Activated naive CD8-positive, alpha-beta T cell treated with anti-CD3 and anti-CD28 coated beads, Interleukin-2, amount 10 ng/mL, durations not matched to agents 7 days and 5 days (primary cell): ENCODE measurements at regions of chr17 and their contacts with region 1.

Region 1: DNA sequence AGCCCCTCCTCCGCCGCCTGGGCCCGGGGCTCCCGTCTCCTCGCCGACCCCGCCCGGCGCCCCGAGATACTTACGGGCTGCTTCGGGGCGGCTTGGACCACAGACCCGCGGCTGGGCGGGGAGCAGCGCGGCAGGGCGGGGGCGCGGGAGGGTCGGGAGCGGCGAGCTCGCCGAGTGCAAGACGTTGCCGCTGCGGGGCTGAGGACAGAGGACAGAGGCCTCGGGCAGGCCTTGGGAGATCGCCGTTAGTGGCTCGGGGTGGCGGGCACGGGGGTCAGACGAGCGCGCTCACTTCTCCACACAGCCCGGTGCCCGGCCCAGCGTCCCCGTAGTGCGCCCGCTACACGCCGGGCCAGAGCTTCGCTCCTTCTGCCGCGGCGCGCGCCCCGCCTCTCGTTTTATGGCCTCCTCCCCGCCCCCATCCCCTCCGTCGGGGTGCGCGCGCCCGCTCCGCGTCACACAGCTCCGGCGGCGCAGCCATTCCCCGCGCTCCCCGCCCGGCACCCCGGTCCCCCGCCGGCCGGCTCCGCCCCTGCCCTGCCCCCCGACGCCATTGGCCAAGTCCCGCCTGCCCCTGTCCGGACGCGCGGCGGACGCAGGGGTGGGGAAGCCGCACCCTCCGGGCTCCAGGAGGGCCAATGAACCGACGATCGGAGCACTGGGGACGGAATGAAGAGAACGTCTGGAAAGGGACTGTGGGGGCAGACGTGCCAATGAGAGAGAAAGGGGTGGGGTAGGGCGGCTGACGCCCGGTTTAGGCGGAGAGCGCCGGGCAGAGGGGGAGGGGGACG is at the start of gene TOB1:
- DNase-seq: peak; percentile 98
- ATAC-seq: peak; percentile 66
- H3K4me3 Mint-ChIP-seq: peak within 1 kb of the TSS; percentile 99
- H3K27ac Mint-ChIP-seq: peak within 1 kb of the TSS; percentile 99
- H3K4me1 Mint-ChIP-seq: peaks cover 35% of the 10 kb centered on the region
- H3K27me3 Mint-ChIP-seq: peaks cover 12% of the 10 kb centered on the region
- total RNA-seq, gene TOB1: 54.9 to 56.6 TPM

Region 2: GRCh38 chr17:50719144-50719923 is 146.8 kb before region 1 on chr17 and contains the start of gene LUC7L3:
- POLR2A ChIA-PET with region 1: interaction called, 13 read pairs
- DNase-seq: peak; percentile 99
- ATAC-seq: peak; percentile 90
- H3K4me3 Mint-ChIP-seq: peak within 1 kb of the TSS; percentile 97
- H3K27ac Mint-ChIP-seq: peak within 1 kb of the TSS; percentile 99
- H3K4me1 Mint-ChIP-seq: peaks cover 18% of the 10 kb centered on the region
- H3K27me3 Mint-ChIP-seq: no peaks in the 10 kb centered on the region
- total RNA-seq, gene LUC7L3: 184 to 200 TPM

Region 3: DNA sequence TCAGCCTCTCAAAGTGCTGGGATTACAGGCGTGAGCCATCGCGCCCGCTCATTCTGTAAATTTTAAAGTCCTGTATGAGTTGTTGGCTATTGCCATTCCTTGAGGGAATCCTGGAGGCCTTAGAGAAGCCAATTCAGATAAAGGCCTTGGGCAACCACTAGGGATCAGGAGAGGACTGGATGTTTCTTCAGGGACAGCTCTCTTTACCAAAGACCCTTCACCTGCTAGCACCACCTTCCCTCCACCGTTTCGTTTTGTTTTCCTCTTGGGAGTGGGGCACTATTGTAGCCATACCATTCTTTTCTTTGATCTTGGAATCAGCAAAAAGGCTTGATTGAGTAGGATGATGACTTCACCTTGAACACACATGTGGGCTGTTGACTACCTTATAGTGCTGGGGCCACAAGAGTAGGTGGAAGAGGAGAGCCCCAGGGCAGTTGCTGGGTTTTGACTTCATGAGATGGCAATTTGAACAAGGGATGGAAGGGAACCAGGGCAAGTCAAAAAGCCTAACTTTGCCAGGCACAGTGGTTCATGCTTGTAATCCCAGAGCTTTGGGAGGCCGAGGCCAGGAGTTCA is 91.9 kb before region 1 on chr17:
- POLR2A ChIA-PET with region 1: no interaction called
- DNase-seq: no peak
- ATAC-seq: no peak
- H3K4me3 Mint-ChIP-seq: no peak overlapping the region
- H3K27ac Mint-ChIP-seq: no peak overlapping the region
- H3K4me1 Mint-ChIP-seq: peaks cover 1% of the 10 kb centered on the region
- H3K27me3 Mint-ChIP-seq: peaks cover 18% of the 10 kb centered on the region

Region 4: GRCh38 chr17:50841949-50842354 is 24.2 kb before region 1 on chr17:
- POLR2A ChIA-PET with region 1: no interaction called
- DNase-seq: peak; percentile 66
- ATAC-seq: peak; percentile 55
- H3K4me3 Mint-ChIP-seq: no peak overlapping the region
- H3K27ac Mint-ChIP-seq: no peak overlapping the region
- H3K4me1 Mint-ChIP-seq: no peaks in the 10 kb centered on the region
- H3K27me3 Mint-ChIP-seq: no peaks in the 10 kb centered on the region

Region 5: DNA sequence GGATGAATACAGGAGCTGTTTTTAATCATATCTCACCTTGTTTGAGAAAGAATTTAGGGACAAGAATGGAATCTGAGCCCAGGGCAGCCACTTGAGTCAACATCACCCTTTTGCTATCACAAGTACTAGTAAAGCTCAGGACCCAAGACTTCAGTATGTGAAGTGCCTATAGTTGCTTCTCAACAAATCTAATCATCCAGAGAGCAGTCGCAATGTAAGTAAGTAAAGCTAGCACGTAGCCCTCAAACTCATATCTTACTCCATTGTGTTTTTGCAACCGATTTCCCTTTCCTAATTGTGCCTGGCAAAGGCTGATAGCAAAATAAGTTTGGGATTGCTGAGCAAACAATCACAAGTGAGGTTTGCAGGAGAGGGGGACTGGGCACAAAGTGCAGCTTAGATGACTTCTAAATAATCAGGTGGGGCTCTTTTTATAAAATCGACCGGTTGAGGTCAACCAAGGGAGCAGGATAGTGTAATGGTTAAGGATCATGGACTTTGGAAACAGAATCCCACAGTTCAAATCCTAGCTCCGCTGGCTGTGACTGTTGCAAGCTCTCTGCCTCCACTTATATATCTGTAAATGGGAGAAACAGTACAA is 13.1 kb before region 1 on chr17:
- POLR2A ChIA-PET with region 1: interaction called, 91 read pairs
- DNase-seq: no peak
- ATAC-seq: no peak
- H3K4me3 Mint-ChIP-seq: no peak overlapping the region
- H3K27ac Mint-ChIP-seq: peak overlapping the region; percentile 87
- H3K4me1 Mint-ChIP-seq: peaks cover 12% of the 10 kb centered on the region
- H3K27me3 Mint-ChIP-seq: peaks cover 9% of the 10 kb centered on the region

Region 6: GRCh38 chr17:50904521-50905459 is 38.6 kb after region 1 on chr17:
- POLR2A ChIA-PET with region 1: interaction called, 139 read pairs
- DNase-seq: no peak
- ATAC-seq: peak; percentile 9
- H3K4me3 Mint-ChIP-seq: no peak overlapping the region
- H3K27ac Mint-ChIP-seq: peak overlapping the region; percentile 21
- H3K4me1 Mint-ChIP-seq: peaks cover 36% of the 10 kb centered on the region
- H3K27me3 Mint-ChIP-seq: no peaks in the 10 kb centered on the region

Region 7: DNA sequence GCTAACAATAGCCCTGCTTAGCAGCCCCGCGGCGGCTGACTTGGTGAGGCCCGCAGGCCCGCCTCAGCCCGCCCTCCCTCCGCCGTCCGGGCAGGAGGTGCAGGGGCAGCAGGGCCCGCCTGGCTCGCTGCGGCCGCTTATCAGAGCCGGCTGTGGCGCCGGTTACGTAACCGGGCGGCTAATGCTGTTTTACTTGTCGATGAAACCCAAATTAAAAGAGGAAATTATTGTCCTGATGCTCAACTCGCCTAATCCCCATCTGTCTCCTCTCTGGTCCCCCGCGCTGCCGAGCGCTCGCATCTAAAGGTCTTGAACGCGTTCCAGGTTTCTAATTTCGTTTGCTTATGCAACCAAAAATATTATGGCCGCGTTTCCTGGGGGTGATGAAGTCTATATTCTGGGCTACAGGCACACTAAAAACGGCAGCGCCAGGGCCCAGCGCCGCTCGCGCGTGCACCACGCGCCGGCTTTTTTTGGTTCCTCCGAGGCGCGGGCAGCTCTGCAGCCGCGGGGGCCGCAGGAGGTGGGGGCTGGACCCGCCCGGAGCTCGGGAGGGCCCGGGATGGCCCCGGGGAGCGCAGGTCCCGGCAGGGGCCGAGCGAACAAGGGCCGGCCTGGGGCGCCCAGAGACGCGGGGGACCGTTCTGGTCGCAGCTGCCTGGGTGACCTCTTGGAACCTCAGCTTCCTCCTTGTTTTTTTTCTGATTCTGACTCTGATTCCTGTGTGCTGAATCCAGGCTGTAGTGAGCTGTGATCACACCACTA is 65.1 kb after region 1 on chr17:
- POLR2A ChIA-PET with region 1: interaction called, 62 read pairs
- DNase-seq: peak; percentile 60
- ATAC-seq: peak; percentile 62
- H3K4me3 Mint-ChIP-seq: peak overlapping the region; percentile 91
- H3K27ac Mint-ChIP-seq: peak overlapping the region; percentile 92
- H3K4me1 Mint-ChIP-seq: peaks cover 23% of the 10 kb centered on the region
- H3K27me3 Mint-ChIP-seq: peaks cover 27% of the 10 kb centered on the region

Region 8: DNA sequence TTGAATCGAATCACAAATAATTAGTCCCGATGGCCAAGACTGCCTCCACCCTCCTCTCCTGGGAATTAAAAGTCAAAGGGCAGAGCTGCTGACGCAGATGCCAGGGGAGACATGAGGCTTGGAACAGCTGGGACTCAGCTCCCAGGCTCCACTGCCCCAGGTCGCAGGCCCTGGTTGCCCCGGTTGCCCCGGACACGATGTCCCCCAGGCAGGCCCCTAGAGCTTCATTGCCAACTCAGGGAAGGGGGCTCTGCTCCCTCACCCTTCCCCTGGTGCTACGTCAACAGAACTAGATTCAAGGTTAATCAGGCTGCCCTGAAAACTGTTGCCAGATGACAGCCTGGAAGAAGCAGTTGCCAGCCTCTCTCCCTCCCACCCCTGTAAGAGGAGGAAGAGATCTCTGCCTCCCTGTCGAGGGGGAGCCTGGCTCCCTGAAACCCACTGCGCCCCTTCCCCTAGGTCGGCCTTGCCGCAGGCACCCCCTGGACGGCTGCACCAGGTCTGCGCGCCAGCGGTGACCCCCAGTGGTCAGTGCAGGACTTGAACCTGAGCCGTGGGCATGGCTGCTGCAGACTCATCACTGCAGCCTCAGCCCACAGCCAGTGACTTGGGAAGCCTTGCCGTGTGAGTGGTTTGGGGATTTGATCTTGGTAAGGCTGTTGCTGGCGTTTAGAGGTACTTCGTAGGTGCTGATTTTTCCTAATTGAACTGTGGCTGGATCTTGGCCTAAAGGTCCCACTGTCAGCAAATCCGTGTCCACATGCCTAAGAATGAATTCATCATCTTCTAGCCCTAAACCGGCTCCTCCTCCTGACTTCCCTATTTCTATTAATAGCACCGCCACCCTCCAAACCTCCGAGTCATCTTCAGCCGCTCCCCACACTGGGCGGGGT is 84.1 kb after region 1 on chr17:
- POLR2A ChIA-PET with region 1: interaction called, 247 read pairs
- DNase-seq: peak; percentile 72
- ATAC-seq: peak; percentile 86
- H3K4me3 Mint-ChIP-seq: no peak overlapping the region
- H3K27ac Mint-ChIP-seq: peak overlapping the region; percentile 38
- H3K4me1 Mint-ChIP-seq: peaks cover 22% of the 10 kb centered on the region
- H3K27me3 Mint-ChIP-seq: peaks cover 4% of the 10 kb centered on the region

Region 9: DNA sequence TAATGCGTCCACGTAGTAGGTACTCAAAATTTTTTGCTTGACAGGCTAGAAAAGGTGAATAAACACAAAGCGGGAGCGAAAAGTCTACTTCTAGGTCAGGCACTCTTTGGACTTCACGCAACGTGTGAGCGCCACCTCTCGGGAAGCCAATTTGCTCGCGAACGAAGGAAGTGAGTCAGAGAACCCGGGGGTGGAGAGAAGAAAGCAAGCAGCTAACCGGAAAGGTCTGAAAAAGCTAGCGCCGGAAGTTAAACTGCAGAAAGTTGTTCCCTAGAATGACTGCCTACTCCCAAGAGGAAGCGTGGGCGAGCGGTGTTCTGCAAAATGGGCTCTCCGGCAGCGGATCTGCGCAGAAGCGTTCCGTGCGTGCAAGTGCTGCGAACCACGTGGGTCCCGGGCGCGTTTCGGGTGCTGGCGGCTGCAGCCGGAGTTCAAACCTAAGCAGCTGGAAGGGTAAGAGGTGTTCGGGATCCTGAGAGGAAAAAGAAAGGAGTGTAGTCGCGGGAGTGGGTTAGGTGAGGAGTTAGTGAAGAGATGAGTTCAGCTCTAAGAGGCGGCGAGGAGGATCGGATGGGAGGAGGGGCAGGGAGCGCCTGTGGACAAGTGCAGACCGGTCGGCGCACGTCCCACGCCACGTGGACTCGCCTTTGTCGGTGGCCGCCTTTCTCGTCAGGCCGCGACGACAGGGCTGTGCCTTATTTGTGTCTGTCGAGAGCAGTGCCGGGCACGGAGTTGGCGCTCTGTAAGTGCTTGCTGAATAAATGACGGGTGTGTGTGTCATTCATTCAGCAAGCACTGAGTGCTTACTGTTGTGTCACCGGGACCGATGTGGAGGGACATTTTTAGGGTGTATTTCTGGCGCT is 287.3 kb after region 1 on chr17 and contains the start of gene NME1:
- POLR2A ChIA-PET with region 1: interaction called, 16 read pairs
- DNase-seq: peak; percentile 98
- ATAC-seq: peak; percentile 95
- H3K4me3 Mint-ChIP-seq: no peak within 1 kb of the TSS
- H3K27ac Mint-ChIP-seq: no peak within 1 kb of the TSS
- H3K4me1 Mint-ChIP-seq: peaks cover 8% of the 10 kb centered on the region
- H3K27me3 Mint-ChIP-seq: no peaks in the 10 kb centered on the region
- total RNA-seq, gene NME1: 71.9 to 73.0 TPM